Tibial artery (tissue), 4 donors: ENCODE measurements at regions of chr20 and their contacts with region 1.

Region 1: DNA sequence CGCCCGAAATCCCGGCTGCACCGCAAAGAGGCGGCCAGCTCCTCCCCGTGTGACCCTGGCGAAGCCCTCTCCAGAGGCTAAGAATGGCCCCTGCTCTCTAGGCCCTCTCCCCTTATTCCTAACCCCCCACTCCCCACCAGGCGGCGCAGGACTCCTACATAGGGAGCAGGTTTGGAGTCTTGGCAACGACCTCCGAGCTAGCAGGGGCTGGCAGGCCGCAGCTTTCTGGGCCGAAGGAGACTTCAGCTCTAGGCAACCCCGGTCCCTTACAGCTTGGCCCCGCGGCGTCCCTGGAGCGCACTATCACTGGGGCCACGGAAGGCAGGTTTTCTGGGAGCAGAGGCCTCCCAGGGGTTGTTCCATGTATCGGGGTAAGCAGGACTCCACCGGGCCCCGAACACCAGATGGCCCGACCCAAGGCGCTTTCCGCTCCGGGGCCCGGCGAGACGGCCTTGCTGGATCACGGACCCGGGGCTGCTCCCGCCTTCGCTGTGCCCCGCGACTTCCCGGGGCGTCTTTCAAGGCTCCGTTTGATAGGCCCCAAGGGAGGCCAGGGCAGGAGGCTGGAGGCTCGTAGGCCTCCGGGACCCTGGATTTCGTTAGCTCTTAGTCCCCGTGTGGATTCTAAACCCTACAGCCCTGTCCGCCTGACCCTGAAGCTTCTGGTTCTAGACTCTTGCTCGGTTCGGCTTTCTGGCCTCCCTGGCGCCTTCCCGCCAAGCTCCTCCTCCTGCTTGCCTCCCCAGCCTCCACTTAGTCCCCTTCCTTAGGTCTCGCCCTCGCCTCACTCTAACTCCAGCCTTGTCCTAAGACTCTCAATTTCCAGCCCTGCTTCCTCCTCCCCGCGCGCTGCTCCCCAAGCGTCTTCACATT is 1.9 kb downstream of the SLC32A1 start:
- DNase-seq: no peak
- H3K4me3 ChIP-seq: no peak overlapping the region
- H3K27ac ChIP-seq: no peak overlapping the region
- H3K4me1 ChIP-seq: peaks cover 0 to 59% (median 41%) of the 10 kb centered on the region in 4 donors
- H3K27me3 ChIP-seq: peaks cover 10 to 100% of the 10 kb centered on the region in 2 donors
- CTCF ChIP-seq: peak; percentile 24 to 27

Region 2: GRCh38 chr20:38094373-38094891 is 631.7 kb before region 1 on chr20:
- intact Hi-C with region 1: no loop called
- DNase-seq: peak; percentile 72 to 77
- H3K4me3 ChIP-seq: no peak overlapping the region
- H3K27ac ChIP-seq: peak overlapping the region; percentile 29 to 46
- H3K4me1 ChIP-seq: peaks cover 0 to 50% (median 24%) of the 10 kb centered on the region in 4 donors
- H3K27me3 ChIP-seq: no peaks in the 10 kb centered on the region
- CTCF ChIP-seq: no peak

Region 3: GRCh38 chr20:38633577-38634093 is 92.5 kb before region 1 on chr20:
- intact Hi-C with region 1: no loop called
- DNase-seq: no peak
- H3K4me3 ChIP-seq: no peak overlapping the region
- H3K27ac ChIP-seq: no peak overlapping the region
- H3K4me1 ChIP-seq: peaks cover 0 to 4% (median 0%) of the 10 kb centered on the region in 4 donors
- H3K27me3 ChIP-seq: peaks cover 0 to 28% of the 10 kb centered on the region in 2 donors
- CTCF ChIP-seq: peak; percentile 56 to 79

Region 4: GRCh38 chr20:38883081-38883980 is 157.2 kb after region 1 on chr20:
- intact Hi-C with region 1: loop called (anchors 10 kb)
- DNase-seq: no peak
- H3K4me3 ChIP-seq: no peak overlapping the region
- H3K27ac ChIP-seq: no peak overlapping the region
- H3K4me1 ChIP-seq: peaks cover 0 to 4% (median 0%) of the 10 kb centered on the region in 4 donors
- H3K27me3 ChIP-seq: peaks cover 0 to 54% of the 10 kb centered on the region in 2 donors
- CTCF ChIP-seq: no peak